Stomach (tissue), 19 donors: ENCODE measurements at regions of chr22 and their contacts with region 1.

Region 1: GRCh38 chr22:38868886-38869381 is 3.1 kb downstream of the CBX6 start:
- DNase-seq: peak; percentile 86 to 90
- H3K4me3 ChIP-seq: no peak overlapping the region
- H3K27ac ChIP-seq: peak overlapping the region in 1 of 5 donors; percentile 35
- H3K4me1 ChIP-seq: peaks cover 61 to 89% (median 72%) of the 10 kb centered on the region in 4 donors
- H3K27me3 ChIP-seq: no peaks in the 10 kb centered on the region
- CTCF ChIP-seq: peak in 5 of 7 experiments; percentile 72 to 92 (median 79)
- EP300 ChIP-seq: no peak
- POLR2A ChIP-seq: no peak

Region 2: GRCh38 chr22:39003165-39003638 is 134.3 kb after region 1 on chr22:
- intact Hi-C with region 1: loop called (anchors 10 kb)
- DNase-seq: peak; percentile 81 to 92
- H3K4me3 ChIP-seq: no peak overlapping the region
- H3K27ac ChIP-seq: peak overlapping the region in 1 of 5 donors; percentile 22
- H3K4me1 ChIP-seq: peaks cover 0 to 9% (median 7%) of the 10 kb centered on the region in 4 donors
- H3K27me3 ChIP-seq: peaks cover 0 to 5% (median 0%) of the 10 kb centered on the region in 3 donors
- CTCF ChIP-seq: peak in 5 of 7 experiments; percentile 64 to 93 (median 70)
- EP300 ChIP-seq: no peak
- POLR2A ChIP-seq: no peak

Region 3: DNA sequence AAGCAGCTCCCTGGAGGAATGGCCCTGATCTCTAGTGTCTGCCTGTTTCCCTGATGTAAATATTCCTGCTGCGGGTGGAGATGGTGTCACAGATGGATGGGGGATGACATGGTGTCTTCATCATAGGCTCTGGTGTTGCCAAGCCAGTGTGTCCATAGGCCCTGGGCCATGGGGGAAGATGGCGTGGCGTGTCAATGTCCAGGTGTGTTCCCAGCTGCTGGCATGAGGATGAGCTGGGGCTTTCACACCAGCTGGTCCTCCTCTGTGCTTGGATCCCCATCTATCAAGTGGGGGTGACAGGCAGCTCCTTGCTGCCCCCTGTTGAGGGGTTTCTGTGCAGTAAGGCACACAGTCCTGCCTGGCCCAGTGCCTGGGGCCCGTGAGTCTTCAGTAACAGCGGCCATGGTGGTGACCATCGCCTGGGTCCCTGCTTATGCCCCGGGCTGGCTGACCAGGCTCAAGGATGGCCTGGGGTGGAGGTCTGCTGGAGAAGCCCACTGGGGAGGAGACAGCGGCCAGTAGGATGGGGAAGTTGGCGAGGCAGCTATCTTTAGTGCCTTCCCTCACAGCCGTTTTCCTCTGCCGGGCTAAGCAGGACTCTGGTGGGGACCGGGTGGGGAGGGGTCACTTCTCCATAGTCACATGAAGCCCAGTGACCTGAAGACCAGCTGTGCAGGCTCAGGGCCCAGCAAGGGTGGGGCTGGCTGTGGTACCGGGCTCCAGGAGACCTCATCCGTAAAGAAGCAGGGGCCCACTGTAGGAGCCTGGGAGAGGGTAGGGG is 437.8 kb after region 1 on chr22:
- intact Hi-C with region 1: no loop called
- DNase-seq: peak in 1 of 2 donors; percentile 51
- H3K4me3 ChIP-seq: no peak overlapping the region
- H3K27ac ChIP-seq: no peak overlapping the region
- H3K4me1 ChIP-seq: peaks cover 0 to 37% (median 18%) of the 10 kb centered on the region in 4 donors
- H3K27me3 ChIP-seq: no peaks in the 10 kb centered on the region
- CTCF ChIP-seq: peak in 2 of 7 experiments; percentile 14 to 27
- EP300 ChIP-seq: no peak
- POLR2A ChIP-seq: no peak